Activated naive CD8-positive, alpha-beta T cell treated with anti-CD3 and anti-CD28 coated beads, Interleukin-2, amount 10 ng/mL, durations not matched to agents 7 days and 5 days (primary cell): ENCODE measurements at regions of chr16 and their contacts with region 1.

Region 1: DNA sequence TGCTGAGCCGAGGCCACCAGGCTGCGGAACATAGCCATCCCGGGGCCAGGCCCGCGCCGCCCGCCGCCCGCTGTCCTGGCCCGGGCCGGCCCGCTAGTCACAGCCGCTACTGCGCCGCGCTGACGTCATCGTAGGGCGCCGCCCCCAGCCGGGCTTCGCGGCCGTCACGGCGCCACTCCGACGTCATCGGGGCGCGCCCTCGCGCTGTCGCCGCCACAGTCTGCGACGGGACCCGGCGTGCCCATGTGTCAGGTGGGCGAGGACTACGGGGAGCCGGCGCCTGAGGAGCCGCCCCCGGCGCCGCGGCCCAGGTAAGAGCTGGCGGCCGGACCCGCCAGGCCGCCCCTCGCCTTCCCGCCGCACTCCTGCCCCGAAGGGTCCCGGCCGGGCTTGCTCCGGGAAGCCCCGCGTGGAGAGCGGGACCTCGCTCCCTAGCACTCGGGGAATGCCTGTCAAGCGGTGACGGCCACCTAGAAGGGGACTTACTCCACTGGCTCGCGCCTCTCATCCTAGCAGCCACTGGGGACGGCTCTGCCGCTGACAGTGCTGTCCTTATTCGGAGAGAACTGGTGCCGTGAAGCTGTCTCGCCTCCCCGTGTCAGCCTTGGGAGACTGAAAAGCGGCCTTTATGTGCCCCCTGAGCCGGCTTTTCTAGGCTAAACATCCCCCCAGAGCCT is at the starts of genes CTU2 and RNF166:
- DNase-seq: peak; percentile 99
- ATAC-seq: peak; percentile 56
- H3K4me3 Mint-ChIP-seq: peak within 1 kb of the TSS; percentile 96
- H3K27ac Mint-ChIP-seq: peak within 1 kb of the TSS; percentile 98
- H3K4me1 Mint-ChIP-seq: peaks cover 21% of the 10 kb centered on the region
- H3K27me3 Mint-ChIP-seq: no peaks in the 10 kb centered on the region
- total RNA-seq, gene CTU2: 22.8 to 25.7 TPM
- total RNA-seq, gene RNF166: 227 to 229 TPM

Region 2: GRCh38 chr16:88610080-88610479 is 96.3 kb before region 1 on chr16:
- POLR2A ChIA-PET with region 1: no interaction called
- DNase-seq: no peak
- ATAC-seq: no peak
- H3K4me3 Mint-ChIP-seq: no peak overlapping the region
- H3K27ac Mint-ChIP-seq: no peak overlapping the region
- H3K4me1 Mint-ChIP-seq: peaks cover 4% of the 10 kb centered on the region
- H3K27me3 Mint-ChIP-seq: no peaks in the 10 kb centered on the region

Region 3: GRCh38 chr16:88627531-88628411 is 78.7 kb before region 1 on chr16:
- POLR2A ChIA-PET with region 1: no interaction called
- DNase-seq: no peak
- ATAC-seq: no peak
- H3K4me3 Mint-ChIP-seq: no peak overlapping the region
- H3K27ac Mint-ChIP-seq: no peak overlapping the region
- H3K4me1 Mint-ChIP-seq: peaks cover 3% of the 10 kb centered on the region
- H3K27me3 Mint-ChIP-seq: no peaks in the 10 kb centered on the region

Region 4: GRCh38 chr16:88650749-88651275 is 55.6 kb before region 1 on chr16 and contains the start of gene CYBA:
- POLR2A ChIA-PET with region 1: interaction called, 25 read pairs
- DNase-seq: peak; percentile 94
- ATAC-seq: peak; percentile 87
- H3K4me3 Mint-ChIP-seq: peak within 1 kb of the TSS; percentile 91
- H3K27ac Mint-ChIP-seq: peak within 1 kb of the TSS; percentile 96
- H3K4me1 Mint-ChIP-seq: peaks cover 9% of the 10 kb centered on the region
- H3K27me3 Mint-ChIP-seq: no peaks in the 10 kb centered on the region
- total RNA-seq, gene CYBA: 505 to 513 TPM

Region 5: GRCh38 chr16:88686439-88687253 is 19.8 kb before region 1 on chr16 and contains the start of gene SNAI3:
- POLR2A ChIA-PET with region 1: interaction called, 66 read pairs
- DNase-seq: peak; percentile 95
- ATAC-seq: peak; percentile 79
- H3K4me3 Mint-ChIP-seq: peak within 1 kb of the TSS; percentile 86
- H3K27ac Mint-ChIP-seq: peak within 1 kb of the TSS; percentile 73
- H3K4me1 Mint-ChIP-seq: peaks cover 32% of the 10 kb centered on the region
- H3K27me3 Mint-ChIP-seq: peaks cover 1% of the 10 kb centered on the region
- total RNA-seq, gene SNAI3: 14.4 to 15.0 TPM

Region 6: GRCh38 chr16:88691924-88692560 is 14.4 kb before region 1 on chr16:
- POLR2A ChIA-PET with region 1: interaction called, 66 read pairs
- DNase-seq: peak; percentile 69
- ATAC-seq: peak; percentile 61
- H3K4me3 Mint-ChIP-seq: peak overlapping the region; percentile 68
- H3K27ac Mint-ChIP-seq: peak overlapping the region; percentile 90
- H3K4me1 Mint-ChIP-seq: peaks cover 31% of the 10 kb centered on the region
- H3K27me3 Mint-ChIP-seq: peaks cover 1% of the 10 kb centered on the region

Region 7: DNA sequence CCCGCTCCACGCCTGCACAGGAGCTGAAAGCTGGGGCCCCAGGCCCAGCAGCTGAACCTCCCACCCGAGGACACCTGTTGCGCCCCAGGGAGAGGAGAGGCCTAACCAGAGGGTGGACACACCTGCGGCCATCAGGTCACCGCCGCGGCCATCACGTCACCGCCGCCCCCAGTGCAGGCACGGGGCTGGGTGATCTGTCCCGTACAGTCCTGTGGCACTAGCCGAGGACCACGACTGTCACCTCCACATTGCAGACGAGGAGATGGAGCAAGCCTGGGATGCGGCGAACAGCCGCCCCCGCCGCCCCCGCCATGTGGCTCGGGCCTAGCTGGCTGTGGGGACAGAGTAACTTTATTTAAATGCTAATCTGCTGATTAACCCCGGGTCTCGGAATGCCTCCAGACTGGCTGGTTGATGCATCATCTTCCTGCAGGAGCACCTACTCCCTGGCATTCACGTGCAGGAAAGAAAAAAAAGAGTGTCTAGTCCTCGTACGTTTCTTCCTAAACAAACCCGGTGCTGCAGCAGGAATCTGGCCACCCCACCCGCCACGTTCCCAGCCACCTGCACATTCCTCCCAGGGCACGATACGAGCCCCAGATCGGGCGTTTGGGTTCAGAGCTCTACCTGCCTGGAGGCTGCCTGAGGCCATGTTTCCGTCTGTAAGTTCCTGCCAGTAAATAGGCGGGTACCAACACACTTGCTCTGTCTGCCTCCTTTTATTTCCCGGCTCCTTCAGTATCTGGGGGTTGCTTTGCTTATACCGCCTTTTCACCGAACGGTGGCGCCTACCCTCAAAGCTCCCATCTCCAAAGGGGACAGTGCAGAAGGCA is 48.7 kb after region 1 on chr16:
- POLR2A ChIA-PET with region 1: no interaction called
- DNase-seq: no peak
- ATAC-seq: peak; percentile 31
- H3K4me3 Mint-ChIP-seq: no peak overlapping the region
- H3K27ac Mint-ChIP-seq: no peak overlapping the region
- H3K4me1 Mint-ChIP-seq: peaks cover 11% of the 10 kb centered on the region
- H3K27me3 Mint-ChIP-seq: no peaks in the 10 kb centered on the region

Region 8: GRCh38 chr16:88803264-88803987 is 97.0 kb after region 1 on chr16 and contains the start of gene CDT1:
- POLR2A ChIA-PET with region 1: interaction called, 12 read pairs
- DNase-seq: peak; percentile 97
- ATAC-seq: peak; percentile 45
- H3K4me3 Mint-ChIP-seq: peak within 1 kb of the TSS; percentile 90
- H3K27ac Mint-ChIP-seq: peak within 1 kb of the TSS; percentile 89
- H3K4me1 Mint-ChIP-seq: peaks cover 23% of the 10 kb centered on the region
- H3K27me3 Mint-ChIP-seq: no peaks in the 10 kb centered on the region
- total RNA-seq, gene CDT1: 135 to 140 TPM